A549 (cell line): ENCODE measurements at regions of chr16 and their contacts with region 1.

Region 1: DNA sequence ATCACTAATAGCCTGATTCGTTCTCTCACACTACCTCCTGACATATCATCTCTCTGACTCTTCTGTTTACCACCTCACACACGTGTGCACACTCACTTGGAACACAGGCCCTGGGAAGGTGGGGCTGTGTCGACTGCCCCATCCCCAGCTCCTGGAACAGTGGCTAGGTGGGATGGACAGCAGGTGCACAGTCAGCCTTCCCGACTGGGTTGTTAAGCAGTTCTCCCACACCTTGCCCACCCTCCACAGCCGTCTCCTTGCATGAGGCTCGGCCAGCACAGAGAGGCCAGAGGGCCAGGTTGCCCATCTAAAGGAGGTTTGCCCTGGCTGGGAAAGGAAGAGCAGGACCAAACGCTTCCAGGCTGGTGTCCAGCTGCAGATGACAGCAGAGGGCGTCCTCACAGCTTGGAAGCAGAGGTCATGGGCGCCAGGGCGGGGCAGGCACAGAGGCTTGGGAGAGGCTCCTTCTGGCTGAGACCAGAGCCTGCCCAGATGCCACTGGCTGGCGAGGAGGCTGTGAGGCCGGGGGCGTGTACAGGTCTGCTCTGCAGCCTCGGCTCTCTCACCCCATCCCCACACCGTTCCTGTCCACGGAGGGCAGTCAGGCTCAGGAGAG is 92.8 kb downstream of the AMFR start:
- DNase-seq: peak; percentile 79 to 86
- ATAC-seq: peak; percentile 93 to 98
- H3K4me3 ChIP-seq: no peak overlapping the region
- H3K27ac ChIP-seq: peak overlapping the region; percentile 43 to 55; a peak in 2 of 6 replicates
- H3K4me1 ChIP-seq: peaks cover 4% of the 10 kb centered on the region; the same call in 2 of the 3 replicates
- CTCF ChIP-seq: peak; percentile 74
- EP300 ChIP-seq: no peak
- POLR2A ChIP-seq: no peak
- RAD21 ChIP-seq: peak; percentile 77 to 79

Region 2: GRCh38 chr16:56348158-56349085 is 15.8 kb after region 1 on chr16:
- CTCF ChIA-PET with region 1: interaction called, 20 read pairs
- POLR2A ChIA-PET with region 1: no interaction called
- DNase-seq: no peak
- ATAC-seq: peak in 1 of 2 experiments; percentile 33; a peak in 3 of 6 replicates
- H3K4me3 ChIP-seq: no peak overlapping the region
- H3K27ac ChIP-seq: no peak overlapping the region
- H3K4me1 ChIP-seq: peaks cover 10% of the 10 kb centered on the region; the same call in 1 of the 3 replicates
- CTCF ChIP-seq: no peak
- EP300 ChIP-seq: no peak
- POLR2A ChIP-seq: no peak
- RAD21 ChIP-seq: no peak